SK-N-SH (cell line): ENCODE measurements at regions of chr11 and their contacts with region 1.

Region 1: DNA sequence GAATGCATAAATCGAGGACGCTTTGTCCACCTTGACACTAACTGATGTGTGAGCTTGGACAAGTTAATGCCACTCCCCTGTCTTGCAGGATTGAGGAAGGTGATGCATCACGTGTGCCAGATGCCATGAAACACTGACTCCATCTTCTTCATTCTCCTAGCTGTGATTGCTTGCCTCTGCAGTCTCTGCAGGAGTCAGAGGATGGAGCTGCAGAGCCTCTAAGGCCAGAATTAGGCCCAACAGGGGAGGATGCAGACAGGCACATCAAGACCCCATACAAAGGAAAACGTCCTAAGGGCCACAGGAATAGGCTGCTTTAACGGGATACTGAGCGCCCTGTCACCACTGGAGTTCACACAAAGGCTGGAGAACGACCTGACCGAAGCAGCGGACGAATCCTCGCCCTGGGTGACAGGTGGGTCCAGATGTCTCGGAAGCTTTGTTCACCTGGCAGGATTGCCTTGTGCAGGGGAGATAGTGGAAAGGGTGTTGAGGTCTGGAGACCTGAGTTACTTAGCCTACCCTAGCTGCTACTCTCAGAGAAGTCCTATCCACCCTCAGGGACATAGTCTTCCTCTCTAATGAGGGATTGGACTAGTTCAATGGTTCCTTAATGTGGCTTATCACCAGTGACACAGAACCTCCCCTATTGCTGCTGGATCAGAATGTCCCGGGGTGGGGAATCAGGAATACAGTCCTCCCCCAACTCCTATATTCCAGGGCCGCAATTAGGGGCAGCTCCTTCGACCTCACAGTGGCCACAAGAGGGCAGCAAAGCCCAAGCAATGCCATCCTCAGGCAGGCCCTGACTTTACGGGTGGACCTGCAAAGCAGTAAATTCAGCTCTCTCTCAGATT is 32.4 kb downstream of the DBX1 start:
- DNase-seq: peak; percentile 84
- H3K4me3 ChIP-seq: no peak overlapping the region; a peak in 1 of 4 replicates
- H3K27ac ChIP-seq: peak overlapping the region in 1 of 2 experiments; percentile 54; a peak in 1 of 4 replicates
- H3K4me1 ChIP-seq: no peaks in the 10 kb centered on the region
- H3K27me3 ChIP-seq: no peaks in the 10 kb centered on the region
- CTCF ChIP-seq: peak; percentile 89
- EP300 ChIP-seq: no peak
- RAD21 ChIP-seq: peak; percentile 97

Region 2: GRCh38 chr11:19938169-19938856 is 189.6 kb before region 1 on chr11:
- CTCF ChIA-PET with region 1: interaction called, 11 read pairs
- POLR2A ChIA-PET with region 1: no interaction called
- DNase-seq: peak; percentile 77
- H3K4me3 ChIP-seq: peak overlapping the region in 1 of 2 experiments; percentile 31; a peak in 1 of 4 replicates
- H3K27ac ChIP-seq: peak overlapping the region; percentile 28 to 93
- H3K4me1 ChIP-seq: peaks cover 22 to 36% of the 10 kb centered on the region in 2 experiments
- H3K27me3 ChIP-seq: no peaks in the 10 kb centered on the region
- CTCF ChIP-seq: peak; percentile 96
- EP300 ChIP-seq: no peak
- RAD21 ChIP-seq: peak; percentile 69

Region 3: GRCh38 chr11:20110908-20111669 is 16.8 kb before region 1 on chr11:
- CTCF ChIA-PET with region 1: interaction called, 42 read pairs
- POLR2A ChIA-PET with region 1: no interaction called
- DNase-seq: peak; percentile 78
- H3K4me3 ChIP-seq: peak overlapping the region in 1 of 2 experiments; percentile 10; a peak in 1 of 4 replicates
- H3K27ac ChIP-seq: peak overlapping the region; percentile 95 to 97
- H3K4me1 ChIP-seq: peaks cover 25 to 49% of the 10 kb centered on the region in 2 experiments
- H3K27me3 ChIP-seq: no peaks in the 10 kb centered on the region
- CTCF ChIP-seq: peak; percentile 96
- EP300 ChIP-seq: peak in 1 of 2 experiments; percentile 98; a peak in 3 of 4 replicates
- RAD21 ChIP-seq: peak; percentile 68

Region 4: DNA sequence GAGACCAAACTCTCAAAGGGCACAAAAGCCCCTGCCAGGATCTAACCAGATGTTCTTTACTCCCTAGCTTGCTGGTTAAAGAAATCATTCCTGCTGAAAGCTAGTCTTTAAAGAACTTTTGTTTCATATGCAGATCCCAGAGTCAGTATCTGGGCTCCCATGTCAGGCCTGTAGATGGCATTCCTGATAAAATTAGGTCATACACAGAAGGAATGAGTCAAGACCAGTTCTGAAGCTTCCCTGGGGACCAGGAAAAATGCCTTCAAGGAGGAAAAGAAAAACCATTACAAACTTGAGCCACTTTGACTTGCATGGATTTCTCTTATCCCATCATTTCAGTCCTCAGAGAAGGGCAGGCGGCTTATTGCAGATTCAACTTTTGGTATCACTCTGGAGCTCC is 26.5 kb after region 1 on chr11:
- CTCF ChIA-PET with region 1: interaction called, 13 read pairs
- POLR2A ChIA-PET with region 1: no interaction called
- DNase-seq: no peak
- H3K4me3 ChIP-seq: no peak overlapping the region
- H3K27ac ChIP-seq: peak overlapping the region in 1 of 2 experiments; percentile 17; a peak in 1 of 4 replicates
- H3K4me1 ChIP-seq: no peaks in the 10 kb centered on the region
- H3K27me3 ChIP-seq: peaks cover 6% of the 10 kb centered on the region; the same call in 1 of the 2 replicates
- CTCF ChIP-seq: no peak; the same call in 1 of the 2 replicates
- EP300 ChIP-seq: no peak
- RAD21 ChIP-seq: no peak

Region 5: GRCh38 chr11:20193307-20193706 is 65.4 kb after region 1 on chr11:
- CTCF ChIA-PET with region 1: interaction called, 10 read pairs
- POLR2A ChIA-PET with region 1: no interaction called
- DNase-seq: no peak
- H3K4me3 ChIP-seq: no peak overlapping the region
- H3K27ac ChIP-seq: no peak overlapping the region
- H3K4me1 ChIP-seq: peaks cover 0 to 2% of the 10 kb centered on the region in 2 experiments; a peak in 1 of 4 replicates
- H3K27me3 ChIP-seq: no peaks in the 10 kb centered on the region; the same call in 1 of the 2 replicates
- CTCF ChIP-seq: no peak
- EP300 ChIP-seq: no peak
- RAD21 ChIP-seq: no peak

Region 6: DNA sequence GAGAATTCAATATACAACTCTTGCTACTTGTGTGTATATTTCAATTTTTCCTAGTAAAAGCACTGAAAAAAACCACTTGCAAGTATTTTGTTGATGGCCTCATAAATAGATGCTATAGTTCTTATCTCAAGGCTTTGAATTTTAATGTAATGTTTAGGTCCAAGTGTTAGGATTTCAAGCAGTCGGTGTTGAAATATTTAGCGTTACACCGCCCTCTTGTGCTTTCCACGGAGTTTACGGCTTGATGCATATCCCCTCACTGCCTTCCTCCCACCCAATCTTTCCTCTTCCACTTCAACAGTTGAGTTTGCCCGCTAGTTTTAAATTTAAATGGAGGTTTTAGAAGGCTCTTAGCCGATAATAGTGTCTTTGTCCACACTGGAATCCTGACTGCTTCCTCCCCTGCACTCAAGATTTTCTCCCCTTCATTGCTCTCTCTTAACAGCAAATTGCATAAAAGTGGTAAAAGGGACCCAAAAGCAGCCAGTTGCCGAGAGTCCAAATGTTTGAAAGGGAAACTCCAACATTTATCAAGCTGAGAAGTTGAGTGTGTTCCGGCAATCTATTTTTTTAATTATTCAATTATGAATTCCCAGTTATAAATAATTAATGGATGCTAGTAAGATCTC is 209.7 kb after region 1 on chr11:
- CTCF ChIA-PET with region 1: interaction called, 208 read pairs
- POLR2A ChIA-PET with region 1: no interaction called
- DNase-seq: peak; percentile 74
- H3K4me3 ChIP-seq: no peak overlapping the region; a peak in 1 of 4 replicates
- H3K27ac ChIP-seq: no peak overlapping the region
- H3K4me1 ChIP-seq: peaks cover 0 to 3% of the 10 kb centered on the region in 2 experiments; a peak in 1 of 4 replicates
- H3K27me3 ChIP-seq: peaks cover 4% of the 10 kb centered on the region; the same call in 1 of the 2 replicates
- CTCF ChIP-seq: peak; percentile 62
- EP300 ChIP-seq: no peak
- RAD21 ChIP-seq: peak; percentile 92

Region 7: DNA sequence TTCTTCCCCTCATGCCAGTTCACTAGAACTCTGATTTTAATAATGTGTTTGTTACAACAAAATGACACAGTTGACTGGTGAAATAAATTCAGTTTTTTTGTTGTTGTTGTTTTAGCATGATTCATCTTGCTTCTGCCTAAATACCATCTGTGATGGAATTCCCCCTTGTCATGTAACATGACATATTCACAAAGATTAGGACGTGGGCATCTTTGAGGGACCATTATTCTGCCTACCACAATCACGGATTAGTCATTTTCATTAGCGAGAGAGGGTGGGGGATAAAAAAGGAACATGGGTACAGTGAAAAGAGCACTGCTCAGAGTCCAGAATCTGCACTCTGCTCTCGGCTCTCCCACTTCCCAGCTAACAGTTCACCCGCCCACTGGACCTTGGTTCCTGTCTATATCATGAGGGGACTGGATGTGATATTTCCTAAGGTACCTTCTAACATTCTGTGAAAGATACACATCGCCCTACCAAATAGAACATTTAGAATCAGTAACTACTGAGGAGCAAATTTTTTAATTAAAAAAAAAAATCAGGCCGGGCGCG is 246.9 kb after region 1 on chr11:
- CTCF ChIA-PET with region 1: interaction called, 13 read pairs
- POLR2A ChIA-PET with region 1: no interaction called
- DNase-seq: no peak
- H3K4me3 ChIP-seq: no peak overlapping the region
- H3K27ac ChIP-seq: no peak overlapping the region
- H3K4me1 ChIP-seq: no peaks in the 10 kb centered on the region
- H3K27me3 ChIP-seq: no peaks in the 10 kb centered on the region
- CTCF ChIP-seq: no peak
- EP300 ChIP-seq: no peak
- RAD21 ChIP-seq: no peak

Region 8: DNA sequence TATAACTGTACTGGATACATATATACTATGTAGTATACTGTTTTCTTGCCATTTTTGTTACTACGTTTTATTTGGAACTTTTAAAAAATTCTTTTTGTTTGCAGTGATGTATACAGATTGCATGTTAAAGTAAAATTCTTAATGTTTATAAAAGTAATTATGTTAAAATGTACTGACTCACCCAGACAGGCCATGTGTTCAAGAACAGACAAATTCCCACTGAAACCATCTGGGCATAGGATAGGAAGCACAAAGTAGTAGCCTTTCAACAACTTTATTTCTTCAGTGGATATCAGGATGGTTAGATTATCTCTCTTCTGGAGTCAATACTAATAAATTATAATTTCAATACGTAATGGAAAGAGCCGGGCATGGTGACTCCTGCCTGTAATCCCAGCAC is 279.4 kb after region 1 on chr11:
- CTCF ChIA-PET with region 1: no interaction called
- POLR2A ChIA-PET with region 1: no interaction called
- DNase-seq: no peak
- H3K4me3 ChIP-seq: no peak overlapping the region
- H3K27ac ChIP-seq: no peak overlapping the region
- H3K4me1 ChIP-seq: no peaks in the 10 kb centered on the region
- H3K27me3 ChIP-seq: no peaks in the 10 kb centered on the region
- CTCF ChIP-seq: no peak
- EP300 ChIP-seq: no peak
- RAD21 ChIP-seq: no peak